ENCODE measurements at regions of chr10 and their contacts with region 1.

Region 1: DNA sequence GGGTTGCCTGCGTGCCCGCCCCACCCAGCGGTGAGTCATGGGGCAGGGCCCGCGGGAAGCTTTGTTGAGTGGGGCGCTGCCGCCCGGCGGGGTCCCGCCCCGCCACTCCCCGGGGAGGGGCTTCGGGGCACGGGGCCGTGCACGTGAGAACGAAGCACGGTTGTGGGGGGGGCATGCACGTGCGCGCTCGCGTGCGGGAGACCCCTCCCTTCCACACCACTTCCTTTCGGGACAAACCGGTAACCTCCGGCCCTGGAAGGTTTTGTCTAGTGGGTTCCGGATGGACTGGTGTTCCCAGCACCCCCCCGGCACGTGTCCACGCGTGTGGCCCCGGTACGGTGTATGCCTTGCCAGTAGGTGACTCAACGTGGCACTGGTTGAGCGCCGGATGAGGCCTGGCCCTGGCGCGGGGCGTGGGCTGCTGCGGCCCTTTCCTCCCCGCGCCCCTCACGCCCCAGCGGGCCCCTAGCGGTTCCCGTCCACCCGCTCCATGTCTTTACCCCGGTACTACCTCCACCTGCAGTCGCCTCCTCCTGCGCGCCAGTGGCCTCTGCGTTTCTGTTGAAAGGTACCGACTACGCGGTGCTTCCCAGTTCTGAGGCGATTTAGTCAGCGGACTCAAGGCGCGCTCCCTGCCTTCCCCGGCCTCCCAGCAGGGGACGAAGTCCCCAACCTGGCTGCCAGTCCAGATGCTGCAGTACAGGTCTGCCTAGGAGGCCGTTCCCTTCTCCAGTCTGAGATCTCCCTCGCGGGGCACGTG is 3.1 kb downstream of the ADIRF start:
- DNase-seq: peak; percentile 92 to 94
- H3K4me3 ChIP-seq: peak overlapping the region; percentile 70 to 77 (median 75)
- H3K27ac ChIP-seq: peak overlapping the region; percentile 99 to 100
- H3K4me1 ChIP-seq: peaks cover 11 to 22% of the 10 kb centered on the region in 2 donors
- H3K27me3 ChIP-seq: no peaks in the 10 kb centered on the region
- CTCF ChIP-seq: peak in 2 of 3 donors; percentile 49 to 59
- POLR2A ChIP-seq: no peak

Region 2: GRCh38 chr10:86945361-86946212 is 25.8 kb before region 1 on chr10:
- intact Hi-C with region 1: no loop called
- DNase-seq: peak in 1 of 2 donors; percentile 16
- H3K4me3 ChIP-seq: no peak overlapping the region
- H3K27ac ChIP-seq: peak overlapping the region in 1 of 2 donors; percentile 28
- H3K4me1 ChIP-seq: peaks cover 0 to 6% of the 10 kb centered on the region in 2 donors
- H3K27me3 ChIP-seq: no peaks in the 10 kb centered on the region
- CTCF ChIP-seq: peak in 1 of 3 donors; percentile 16
- POLR2A ChIP-seq: no peak

Region 3: GRCh38 chr10:88553116-88553752 is 1581.8 kb after region 1 on chr10:
- intact Hi-C with region 1: loop called (anchors 10 kb)
- DNase-seq: peak in 1 of 2 donors; percentile 56
- H3K4me3 ChIP-seq: no peak overlapping the region
- H3K27ac ChIP-seq: no peak overlapping the region
- H3K4me1 ChIP-seq: no peaks in the 10 kb centered on the region
- H3K27me3 ChIP-seq: no peaks in the 10 kb centered on the region
- CTCF ChIP-seq: peak; percentile 52 to 88 (median 80)
- POLR2A ChIP-seq: no peak